ENCODE measurements at regions of chr1 and their contacts with region 1.

Region 1: GRCh38 chr1:32221980-32222755 is at the starts of genes EIF3I and TMEM234:
- DNase-seq: peak; percentile 93
- H3K4me3 ChIP-seq: peak within 1 kb of the TSS; percentile 61 to 99 (median 90)
- H3K27ac ChIP-seq: peak within 1 kb of the TSS; percentile 77 to 89 (median 84)
- H3K4me1 ChIP-seq: peaks cover 27 to 36% of the 10 kb centered on the region in 2 donors
- H3K27me3 ChIP-seq: no peaks in the 10 kb centered on the region
- CTCF ChIP-seq: no peak
- POLR2A ChIP-seq: peak in 1 of 2 donors; percentile 75
- total RNA-seq, gene EIF3I: 193 to 383 (median 216) TPM
- total RNA-seq, gene TMEM234: 38.4 to 52.8 (median 39.2) TPM

Region 2: DNA sequence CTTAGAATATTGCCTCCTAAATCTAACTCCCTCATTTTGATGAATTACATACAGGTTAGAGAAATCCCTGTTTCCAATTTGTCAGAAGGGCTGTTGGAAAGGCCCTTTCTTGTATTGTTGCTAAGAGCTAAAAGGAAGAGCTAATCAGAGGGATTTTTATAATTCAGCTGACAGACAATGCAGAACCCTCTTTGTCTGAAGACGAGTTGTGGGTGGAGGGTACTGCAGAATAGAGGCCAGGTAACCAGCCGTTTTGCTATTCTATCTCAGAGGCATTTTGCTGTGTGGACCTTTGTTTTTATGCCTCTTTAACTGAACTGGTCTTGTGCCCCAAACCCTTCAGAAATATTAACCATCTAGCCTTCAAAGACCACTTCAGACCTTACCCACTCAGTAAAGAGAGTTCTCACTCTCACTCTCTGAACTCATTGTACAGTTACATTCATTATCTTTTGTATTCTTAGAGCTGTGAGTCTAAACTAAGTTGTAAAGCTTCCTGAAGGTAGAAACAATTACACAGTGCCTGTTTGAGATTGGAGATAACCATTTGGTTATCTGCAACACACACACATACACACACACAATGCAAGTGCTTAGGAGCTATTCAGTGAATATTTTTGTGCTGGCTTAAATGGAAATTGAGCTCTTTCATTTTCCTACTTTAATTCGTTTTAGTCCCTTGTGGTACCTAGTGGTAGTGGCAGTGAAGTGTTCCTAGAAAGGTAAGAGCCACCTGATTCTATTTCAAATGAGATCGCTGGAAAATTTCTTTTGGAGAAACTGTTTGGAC is 94.6 kb before region 1 on chr1:
- intact Hi-C with region 1: no loop called
- DNase-seq: no peak
- H3K4me3 ChIP-seq: no peak overlapping the region
- H3K27ac ChIP-seq: no peak overlapping the region
- H3K4me1 ChIP-seq: peaks cover 0 to 4% of the 10 kb centered on the region in 2 donors
- H3K27me3 ChIP-seq: no peaks in the 10 kb centered on the region
- CTCF ChIP-seq: peak in 3 of 6 experiments; percentile 20 to 28 (median 28)
- POLR2A ChIP-seq: no peak

Region 3: GRCh38 chr1:32394141-32394889 is 172.1 kb after region 1 on chr1 and contains the start of gene BSDC1:
- intact Hi-C with region 1: loop called (anchors 10 kb)
- DNase-seq: peak; percentile 99
- H3K4me3 ChIP-seq: peak within 1 kb of the TSS; percentile 50 to 94 (median 78)
- H3K27ac ChIP-seq: peak within 1 kb of the TSS; percentile 91 to 94 (median 93)
- H3K4me1 ChIP-seq: peaks cover 19 to 27% of the 10 kb centered on the region in 2 donors
- H3K27me3 ChIP-seq: no peaks in the 10 kb centered on the region
- CTCF ChIP-seq: peak in 1 of 6 experiments; percentile 13
- POLR2A ChIP-seq: peak; percentile 66 to 96
- total RNA-seq, gene BSDC1: 93.0 to 132 (median 101) TPM